MCF 10A (cell line): ENCODE measurements at regions of chr9 and their contacts with region 1.

Region 1: GRCh38 chr9:34665381-34666250 is 3.2 kb upstream of the CCL27 start:
- DNase-seq: peak; percentile 94
- H3K4me3 Mint-ChIP-seq: peak overlapping the region; percentile 92
- H3K27ac Mint-ChIP-seq: peak overlapping the region; percentile 96
- H3K4me1 Mint-ChIP-seq: peaks cover 17% of the 10 kb centered on the region
- H3K27me3 Mint-ChIP-seq: no peaks in the 10 kb centered on the region
- CTCF ChIP-seq: no peak

Region 2: GRCh38 chr9:34646211-34647083 is 19.2 kb before region 1 on chr9 and contains the start of gene GALT:
- CTCF ChIA-PET with region 1: interaction called, 9 read pairs
- POLR2A ChIA-PET with region 1: interaction called, 11 read pairs
- intact Hi-C with region 1: loop called (anchors 2 kb)
- DNase-seq: peak; percentile 92
- H3K4me3 Mint-ChIP-seq: peak within 1 kb of the TSS; percentile 84
- H3K27ac Mint-ChIP-seq: peak within 1 kb of the TSS; percentile 65
- H3K4me1 Mint-ChIP-seq: peaks cover 21% of the 10 kb centered on the region
- H3K27me3 Mint-ChIP-seq: no peaks in the 10 kb centered on the region
- CTCF ChIP-seq: peak; percentile 17
- total RNA-seq, gene GALT: 21.3 and 26.8 TPM in 2 replicates

Region 3: DNA sequence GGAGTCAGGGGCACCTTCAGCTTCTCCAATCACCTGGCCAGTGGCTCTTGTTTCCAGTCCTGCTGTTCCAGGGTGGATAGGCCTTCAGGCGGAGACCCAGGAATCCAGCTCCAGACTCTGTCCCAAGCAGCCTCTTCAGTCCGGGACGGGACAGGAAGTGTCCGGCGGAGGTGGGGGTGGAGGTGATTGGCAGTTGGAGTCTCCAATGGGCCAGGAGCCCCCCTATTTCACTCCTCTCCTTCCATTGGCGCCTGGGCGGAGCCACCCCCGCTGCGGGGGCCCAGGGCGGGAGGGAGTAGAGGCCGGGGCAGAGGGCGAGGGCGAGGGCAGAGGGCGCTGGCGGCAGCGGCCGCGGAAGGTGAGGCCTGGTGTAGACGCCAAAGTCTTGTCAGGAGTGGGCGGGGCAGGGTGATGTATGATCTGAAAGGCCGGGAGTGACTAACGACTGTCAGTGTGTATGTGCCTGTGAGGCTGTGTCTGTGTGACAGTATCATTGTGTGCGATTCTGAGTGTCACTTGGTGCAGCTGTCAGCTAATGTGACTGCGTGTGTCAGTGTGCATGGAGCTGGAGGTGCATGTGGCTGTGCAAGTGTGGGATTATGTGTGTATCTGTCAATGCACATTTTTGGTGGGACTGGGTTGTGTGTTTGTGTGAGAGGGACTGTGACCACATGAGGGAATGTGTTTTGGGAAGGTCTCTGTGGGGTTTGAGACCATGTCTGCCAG is 13.6 kb before region 1 on chr9 and contains the start of gene IL11RA:
- CTCF ChIA-PET with region 1: interaction called, 9 read pairs
- POLR2A ChIA-PET with region 1: interaction called, 11 read pairs
- intact Hi-C with region 1: loop called (anchors 2 kb)
- DNase-seq: peak; percentile 86
- H3K4me3 Mint-ChIP-seq: peak within 1 kb of the TSS; percentile 69
- H3K27ac Mint-ChIP-seq: peak within 1 kb of the TSS; percentile 72
- H3K4me1 Mint-ChIP-seq: peaks cover 38% of the 10 kb centered on the region
- H3K27me3 Mint-ChIP-seq: no peaks in the 10 kb centered on the region
- CTCF ChIP-seq: no peak
- total RNA-seq, gene IL11RA: 4.0 and 8.0 TPM in 2 replicates